ENCODE measurements at regions of chr6 and their contacts with region 1.

Region 1: DNA sequence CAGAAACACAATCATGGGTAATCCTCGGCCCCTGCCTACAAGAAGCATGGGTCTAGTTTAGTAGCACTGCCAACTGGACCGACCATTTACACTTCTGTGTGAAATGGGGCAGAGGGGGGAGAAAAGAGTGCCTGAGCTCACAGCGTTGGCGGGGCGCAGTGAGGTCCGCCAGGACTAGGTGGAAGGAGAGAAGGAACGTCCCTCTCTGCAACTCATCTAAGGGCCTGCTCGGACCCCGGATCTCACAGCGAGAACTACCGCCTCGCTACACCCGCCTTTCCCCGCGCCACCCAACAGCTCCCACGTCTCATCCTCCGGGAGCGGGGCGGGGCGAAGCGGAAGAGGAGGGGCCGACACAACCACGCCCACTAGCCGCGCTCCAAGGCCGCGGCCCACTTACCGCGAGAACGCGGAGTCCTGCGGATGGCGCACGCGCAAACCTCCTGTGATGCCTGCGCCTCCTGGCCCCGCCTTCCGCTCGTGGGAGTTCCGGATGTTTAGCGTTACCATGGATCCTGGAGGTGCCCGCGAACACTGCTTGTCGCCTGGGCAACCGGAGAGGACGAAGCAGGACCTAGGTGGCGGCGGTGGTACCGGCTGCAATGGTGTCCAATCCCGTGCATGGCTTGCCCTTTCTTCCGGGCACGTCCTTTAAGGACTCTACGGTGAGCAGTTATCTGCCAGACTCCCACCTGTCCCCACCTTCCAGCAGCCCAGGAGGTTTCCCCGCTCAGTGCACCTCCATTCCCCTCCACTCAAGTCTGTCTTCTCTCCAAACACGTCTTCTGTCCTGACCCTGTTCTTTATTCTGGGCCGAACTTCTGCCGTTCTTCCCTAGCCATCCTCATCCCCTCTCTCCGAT is at the start of gene EFHC1:
- DNase-seq: peak; percentile 99
- H3K4me3 ChIP-seq: peak within 1 kb of the TSS; percentile 52 to 81 (median 58)
- H3K27ac ChIP-seq: peak within 1 kb of the TSS; percentile 75 to 87 (median 86)
- H3K4me1 ChIP-seq: peaks cover 8 to 15% (median 11%) of the 10 kb centered on the region in 4 donors
- H3K27me3 ChIP-seq: no peaks in the 10 kb centered on the region
- CTCF ChIP-seq: no peak
- EP300 ChIP-seq: no peak
- POLR2A ChIP-seq: peak; percentile 57
- total RNA-seq, gene EFHC1: 17.1 to 28.4 (median 19.5) TPM

Region 2: DNA sequence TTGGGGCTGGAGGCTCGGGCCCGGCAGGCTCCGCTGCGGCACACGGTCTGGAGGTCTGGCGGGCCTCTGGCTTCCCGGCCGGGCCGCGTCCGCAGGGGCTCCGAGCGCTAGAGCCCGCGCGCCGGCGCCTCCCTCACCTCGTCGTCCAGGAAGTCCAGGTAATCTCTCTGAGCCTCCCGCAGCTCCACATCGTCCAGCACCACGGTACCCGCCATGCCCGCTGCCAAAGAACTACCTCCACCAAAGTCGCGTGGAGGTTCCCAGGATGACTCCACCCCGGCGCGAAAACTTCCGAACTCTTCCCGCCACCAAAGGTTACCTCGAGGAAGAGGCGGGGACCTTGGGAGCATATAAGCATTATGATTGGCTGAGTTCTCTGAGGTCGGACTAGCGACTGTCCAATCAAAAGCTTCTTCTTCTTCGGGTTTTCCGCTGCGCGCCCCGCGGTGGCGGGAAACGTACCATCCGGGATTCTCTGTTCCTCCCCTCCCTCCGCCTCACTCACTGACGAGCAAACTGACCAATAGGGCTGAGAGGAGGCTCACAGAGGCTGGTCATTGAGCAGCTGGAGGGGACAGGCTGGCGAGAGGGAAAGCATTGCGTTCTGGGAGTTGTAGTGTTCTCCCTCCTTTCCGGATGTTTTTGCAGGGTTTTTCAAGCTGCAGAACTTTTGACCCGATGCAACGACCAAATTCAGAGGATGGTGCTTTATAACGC is 135.4 kb before region 1 on chr6 and contains the start of gene MCM3:
- in situ Hi-C with region 1: loop called in 1 of 4 experiments (anchors 25 kb)
- intact Hi-C with region 1: no loop called
- DNase-seq: peak; percentile 98
- H3K4me3 ChIP-seq: peak within 1 kb of the TSS; percentile 57 to 97 (median 73)
- H3K27ac ChIP-seq: peak within 1 kb of the TSS; percentile 73 to 90 (median 82)
- H3K4me1 ChIP-seq: peaks cover 5 to 35% (median 17%) of the 10 kb centered on the region in 4 donors
- H3K27me3 ChIP-seq: no peaks in the 10 kb centered on the region
- CTCF ChIP-seq: peak in 3 of 5 experiments; percentile 5 to 57 (median 47)
- EP300 ChIP-seq: no peak
- POLR2A ChIP-seq: peak; percentile 29
- total RNA-seq, gene MCM3: 13.5 to 27.3 (median 24.2) TPM

Region 3: DNA sequence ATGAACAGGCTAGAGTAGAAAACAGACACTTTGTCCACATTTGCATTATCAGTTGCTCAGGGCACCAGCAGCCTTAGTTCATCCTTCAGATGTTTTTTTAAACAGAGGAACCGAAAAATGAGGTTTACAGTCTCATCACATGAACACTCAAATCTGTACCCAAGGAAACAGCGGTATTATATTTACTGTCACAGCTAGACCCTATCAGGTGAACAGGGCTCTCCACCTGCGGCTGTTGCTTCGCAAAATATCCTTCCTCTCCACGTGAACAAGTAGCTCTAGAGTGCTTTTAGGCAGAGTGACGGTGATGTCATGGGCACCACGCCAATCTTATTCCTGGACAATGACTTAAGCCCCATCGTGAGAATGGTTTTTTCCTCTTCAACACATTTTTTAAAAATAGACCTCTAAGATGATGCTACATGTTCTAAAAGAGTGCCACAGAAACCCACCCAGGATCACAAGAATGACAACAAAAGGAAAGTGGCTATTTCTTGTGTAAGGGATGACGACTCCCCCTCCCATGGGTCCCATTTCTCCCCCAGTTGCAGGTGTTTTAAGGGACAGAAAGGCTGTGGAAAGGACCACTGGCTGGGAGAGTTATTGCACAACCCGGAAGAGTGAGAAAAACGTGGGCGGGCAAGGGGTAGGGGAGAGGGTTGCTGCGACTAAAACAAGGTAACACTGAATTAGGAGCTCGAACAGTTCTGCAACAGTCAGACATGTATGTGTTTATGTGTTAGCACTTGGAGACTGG is 77.8 kb after region 1 on chr6:
- in situ Hi-C with region 1: loop called in 1 of 4 experiments (anchors 10 kb)
- intact Hi-C with region 1: loop called (anchors 10 kb)
- DNase-seq: peak; percentile 72
- H3K4me3 ChIP-seq: no peak overlapping the region
- H3K27ac ChIP-seq: peak overlapping the region; percentile 37 to 76 (median 48)
- H3K4me1 ChIP-seq: peaks cover 0 to 3% (median under 1%) of the 10 kb centered on the region in 4 donors
- H3K27me3 ChIP-seq: no peaks in the 10 kb centered on the region
- CTCF ChIP-seq: no peak
- EP300 ChIP-seq: no peak
- POLR2A ChIP-seq: no peak

Region 4: GRCh38 chr6:52503848-52504781 is 84.1 kb after region 1 on chr6:
- in situ Hi-C with region 1: loop called in 1 of 4 experiments (anchors 10 kb)
- intact Hi-C with region 1: loop called (anchors 10 kb)
- DNase-seq: peak; percentile 97
- H3K4me3 ChIP-seq: no peak overlapping the region
- H3K27ac ChIP-seq: peak overlapping the region; percentile 63 to 82 (median 72)
- H3K4me1 ChIP-seq: peaks cover 12 to 37% (median 28%) of the 10 kb centered on the region in 4 donors
- H3K27me3 ChIP-seq: no peaks in the 10 kb centered on the region
- CTCF ChIP-seq: no peak
- EP300 ChIP-seq: peak; percentile 64
- POLR2A ChIP-seq: peak; percentile 19

Region 5: GRCh38 chr6:52577022-52577777 is 157.2 kb after region 1 on chr6 and contains the start of gene TRAM2:
- in situ Hi-C with region 1: loop called in 1 of 4 experiments (anchors 5 kb)
- intact Hi-C with region 1: no loop called
- DNase-seq: peak; percentile 89
- H3K4me3 ChIP-seq: peak within 1 kb of the TSS; percentile 65 to 82 (median 78)
- H3K27ac ChIP-seq: peak within 1 kb of the TSS; percentile 97 to 98 (median 98)
- H3K4me1 ChIP-seq: peaks cover 19 to 50% (median 40%) of the 10 kb centered on the region in 4 donors
- H3K27me3 ChIP-seq: no peaks in the 10 kb centered on the region
- CTCF ChIP-seq: peak in 1 of 5 experiments; percentile 30
- EP300 ChIP-seq: no peak
- POLR2A ChIP-seq: peak; percentile 71
- total RNA-seq, gene TRAM2: 8.4 to 15.4 (median 11.7) TPM

Region 6: DNA sequence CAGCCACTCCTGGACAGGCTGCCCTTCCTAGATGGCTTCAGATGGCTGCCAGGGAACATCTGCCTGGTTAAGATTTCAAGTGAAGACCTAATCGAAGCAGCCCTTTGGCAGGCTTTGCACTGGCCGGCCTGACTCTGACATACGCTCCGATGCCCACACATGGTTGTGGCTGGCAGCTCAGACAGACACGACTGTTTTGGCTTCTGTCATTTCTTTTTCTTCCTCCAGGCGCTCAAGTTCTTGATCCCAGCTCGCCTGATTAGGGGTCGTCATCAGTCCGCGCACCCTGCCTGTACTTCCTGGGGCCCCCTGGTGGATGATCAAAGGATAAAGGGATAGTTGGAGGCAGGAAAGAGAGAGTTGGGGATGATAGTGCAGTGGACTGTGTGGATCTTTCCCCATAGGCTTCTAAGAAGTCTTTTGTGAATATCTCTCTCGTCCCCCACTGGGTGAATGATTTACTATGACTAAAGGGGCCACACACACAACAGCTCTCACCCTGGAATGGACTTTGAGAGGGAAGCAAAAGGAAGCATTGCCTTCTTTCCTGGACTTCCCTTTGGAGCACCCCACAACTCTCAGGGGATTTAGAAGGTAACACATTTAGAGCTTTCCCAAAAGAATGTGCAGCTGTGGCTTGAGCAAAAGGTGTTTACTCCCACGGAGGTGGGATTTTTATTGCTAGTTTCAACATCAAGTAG is 178.2 kb after region 1 on chr6:
- in situ Hi-C with region 1: loop called in 3 of 4 experiments (anchors 5 to 10 kb)
- intact Hi-C with region 1: loop called (anchors 2 kb)
- DNase-seq: peak; percentile 52
- H3K4me3 ChIP-seq: peak overlapping the region in 1 of 4 donors; percentile 3
- H3K27ac ChIP-seq: peak overlapping the region in 2 of 4 donors; percentile 13 to 18
- H3K4me1 ChIP-seq: peaks cover 8 to 32% (median 23%) of the 10 kb centered on the region in 4 donors
- H3K27me3 ChIP-seq: no peaks in the 10 kb centered on the region
- CTCF ChIP-seq: peak; percentile 63 to 80 (median 64)
- EP300 ChIP-seq: no peak
- POLR2A ChIP-seq: no peak

Region 7: DNA sequence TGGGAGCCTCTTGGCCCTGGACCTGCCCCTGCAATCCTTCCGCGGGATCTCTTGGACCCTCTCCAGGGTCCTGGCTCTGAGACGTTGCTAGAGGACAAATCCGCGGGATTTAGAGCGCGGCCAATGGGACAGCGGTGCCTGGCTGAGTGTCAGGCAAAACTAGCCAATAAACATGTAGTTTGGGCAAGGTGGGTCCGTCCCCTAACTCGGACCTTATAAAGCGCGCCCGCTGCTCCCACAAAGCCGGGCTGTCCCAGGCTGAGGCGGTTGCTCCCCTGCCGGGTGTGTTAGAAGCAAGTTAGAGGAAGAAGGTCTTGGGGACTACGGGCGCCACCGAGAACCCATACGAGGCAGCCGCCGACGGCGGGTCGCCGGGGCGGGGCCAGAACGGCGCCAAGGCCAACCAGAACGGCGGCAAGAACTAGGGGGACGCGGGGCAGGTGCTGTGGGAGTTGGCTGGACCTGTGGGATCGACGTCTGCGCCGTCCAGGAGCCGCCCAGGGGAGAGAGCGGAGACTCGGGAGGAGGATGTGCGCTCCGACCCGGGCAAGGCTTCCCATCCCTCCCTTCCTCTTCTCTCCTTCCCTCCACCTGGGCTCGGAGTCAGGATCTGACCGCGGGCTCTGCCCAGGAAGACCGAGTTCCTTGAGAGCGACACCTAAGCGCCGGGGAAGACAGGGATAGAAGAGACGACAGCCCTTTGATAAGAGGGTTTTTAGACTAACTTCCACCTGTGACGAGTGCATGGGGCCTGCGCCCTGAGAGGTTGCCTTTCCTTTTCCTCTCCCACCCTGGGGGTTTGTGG is 244.3 kb after region 1 on chr6:
- in situ Hi-C with region 1: loop called (anchors 5 kb)
- intact Hi-C with region 1: loop called (anchors 5 kb)
- DNase-seq: peak; percentile 94
- H3K4me3 ChIP-seq: peak overlapping the region; percentile 55 to 85 (median 77)
- H3K27ac ChIP-seq: peak overlapping the region; percentile 83 to 90 (median 85)
- H3K4me1 ChIP-seq: peaks cover 0 to 24% (median 18%) of the 10 kb centered on the region in 4 donors
- H3K27me3 ChIP-seq: no peaks in the 10 kb centered on the region
- CTCF ChIP-seq: no peak
- EP300 ChIP-seq: no peak
- POLR2A ChIP-seq: peak; percentile 94